GM12878 (cell line): ENCODE measurements at regions of chr3 and their contacts with region 1.

Region 1: GRCh38 chr3:140128631-140129030 is 193.6 kb downstream of the CLSTN2 start:
- DNase-seq: no peak
- ATAC-seq: peak; percentile 95
- H3K4me3 ChIP-seq: no peak overlapping the region
- H3K27ac ChIP-seq: no peak overlapping the region
- H3K4me1 ChIP-seq: no peaks in the 10 kb centered on the region
- H3K27me3 ChIP-seq: peaks cover 0 to 2% of the 10 kb centered on the region in 2 experiments; a peak in 2 of 4 replicates
- CTCF ChIP-seq: peak; percentile 71 to 84 (median 72)
- EP300 ChIP-seq: no peak
- POLR2A ChIP-seq: no peak
- RAD21 ChIP-seq: peak; percentile 85

Region 2: DNA sequence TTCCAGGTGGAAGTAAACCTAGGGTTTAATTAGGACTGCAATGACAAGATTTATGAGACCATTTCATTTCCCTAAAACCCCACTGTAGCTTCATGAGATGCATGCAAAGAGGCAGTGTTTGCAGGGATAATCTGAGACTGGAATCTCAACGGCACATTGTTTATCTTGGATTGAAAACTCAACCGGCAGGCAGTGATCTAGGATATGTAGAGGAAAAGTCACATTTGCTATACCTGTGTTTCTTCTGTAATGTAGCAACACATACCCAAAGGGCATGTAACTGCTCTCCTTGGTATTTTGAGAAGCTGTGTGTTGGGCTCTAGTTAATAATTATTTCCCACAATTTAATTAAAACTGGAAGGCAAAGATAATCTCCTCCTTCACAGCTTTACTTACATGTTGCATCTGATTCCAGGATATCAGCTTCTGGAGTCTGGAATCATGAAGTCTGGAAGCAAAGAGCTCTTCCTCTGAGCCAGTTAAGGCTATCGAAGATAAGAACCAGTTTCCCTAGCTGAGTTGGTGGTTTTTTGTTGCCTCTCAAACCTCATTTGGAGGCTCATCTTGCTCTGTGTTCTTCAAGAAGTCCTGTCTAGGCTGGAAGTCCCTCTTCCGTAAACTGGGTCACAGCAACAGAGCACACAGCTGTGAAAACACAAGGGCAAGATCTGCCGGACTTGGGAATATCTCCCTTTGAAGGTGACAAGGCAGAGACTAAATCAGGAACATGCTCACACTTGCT is 212.1 kb before region 1 on chr3:
- CTCF ChIA-PET with region 1: no interaction called
- POLR2A ChIA-PET with region 1: no interaction called
- RAD21 ChIA-PET with region 1: no interaction called
- SMC1A ChIA-PET with region 1: no interaction called
- in situ Hi-C with region 1: no loop called
- intact Hi-C with region 1: no loop called
- DNase-seq: no peak
- ATAC-seq: no peak
- H3K4me3 ChIP-seq: no peak overlapping the region
- H3K27ac ChIP-seq: no peak overlapping the region
- H3K4me1 ChIP-seq: no peaks in the 10 kb centered on the region
- H3K27me3 ChIP-seq: no peaks in the 10 kb centered on the region
- CTCF ChIP-seq: no peak
- EP300 ChIP-seq: no peak
- POLR2A ChIP-seq: no peak
- RAD21 ChIP-seq: no peak

Region 3: DNA sequence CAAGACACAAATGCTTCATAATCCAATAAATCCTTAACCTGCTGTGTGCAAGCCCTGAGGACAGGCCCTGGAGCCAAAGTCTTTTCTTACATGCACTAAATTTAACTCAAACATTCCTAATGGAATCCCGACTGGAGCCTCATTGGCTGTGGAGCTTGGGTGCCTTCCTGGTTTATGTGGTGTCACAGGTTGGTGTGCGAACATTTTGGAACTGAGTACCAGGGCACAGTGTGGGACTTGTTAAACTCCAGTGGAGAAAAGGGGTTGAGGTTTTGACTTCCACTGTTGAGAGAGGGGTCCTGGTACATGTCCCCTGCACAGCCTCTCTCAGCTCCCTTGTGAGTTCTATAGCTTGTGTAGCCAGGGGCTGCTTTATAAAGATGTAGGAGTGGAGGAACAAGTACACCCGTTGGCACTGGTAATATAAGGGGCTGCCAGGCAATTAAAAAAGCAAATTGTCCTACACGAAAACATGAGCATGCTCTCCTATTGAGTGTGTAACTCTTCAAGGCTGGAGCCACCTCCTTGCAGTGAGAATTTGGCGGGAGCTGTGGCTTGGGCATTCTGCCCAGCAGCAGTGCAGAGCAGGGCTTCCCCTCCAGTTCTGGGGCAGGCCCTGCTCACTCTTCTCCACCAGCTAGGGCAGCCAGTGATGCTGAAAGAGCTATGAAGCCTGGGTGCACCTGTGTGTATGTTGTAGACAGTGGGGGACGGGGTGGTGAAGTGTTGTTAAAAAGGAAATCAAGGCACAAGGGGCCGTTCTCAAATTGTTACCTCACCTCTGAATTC is 24.4 kb after region 1 on chr3:
- CTCF ChIA-PET with region 1: interaction called, 11 read pairs
- POLR2A ChIA-PET with region 1: interaction called, 3 read pairs
- RAD21 ChIA-PET with region 1: interaction called, 3 read pairs
- SMC1A ChIA-PET with region 1: interaction called, 6 read pairs
- in situ Hi-C with region 1: no loop called
- intact Hi-C with region 1: no loop called
- DNase-seq: no peak
- ATAC-seq: peak; percentile 26; the same call in 1 of the 3 replicates
- H3K4me3 ChIP-seq: no peak overlapping the region
- H3K27ac ChIP-seq: no peak overlapping the region
- H3K4me1 ChIP-seq: 0 out of 2 replicates have a peak, but pooled peaks cover 11% of the 10 kb centered on the region
- H3K27me3 ChIP-seq: no peaks in the 10 kb centered on the region
- CTCF ChIP-seq: no peak
- EP300 ChIP-seq: no peak
- POLR2A ChIP-seq: no peak
- RAD21 ChIP-seq: no peak

Region 4: GRCh38 chr3:140176526-140176925 is 47.9 kb after region 1 on chr3:
- CTCF ChIA-PET with region 1: interaction called, 12 read pairs
- POLR2A ChIA-PET with region 1: no interaction called
- RAD21 ChIA-PET with region 1: interaction called, 5 read pairs
- SMC1A ChIA-PET with region 1: interaction called, 12 read pairs
- in situ Hi-C with region 1: no loop called
- intact Hi-C with region 1: no loop called
- DNase-seq: no peak
- ATAC-seq: no peak
- H3K4me3 ChIP-seq: no peak overlapping the region
- H3K27ac ChIP-seq: no peak overlapping the region
- H3K4me1 ChIP-seq: no peaks in the 10 kb centered on the region; the same call in 1 of the 2 replicates
- H3K27me3 ChIP-seq: no peaks in the 10 kb centered on the region
- CTCF ChIP-seq: no peak
- EP300 ChIP-seq: no peak
- POLR2A ChIP-seq: no peak
- RAD21 ChIP-seq: no peak

Region 5: DNA sequence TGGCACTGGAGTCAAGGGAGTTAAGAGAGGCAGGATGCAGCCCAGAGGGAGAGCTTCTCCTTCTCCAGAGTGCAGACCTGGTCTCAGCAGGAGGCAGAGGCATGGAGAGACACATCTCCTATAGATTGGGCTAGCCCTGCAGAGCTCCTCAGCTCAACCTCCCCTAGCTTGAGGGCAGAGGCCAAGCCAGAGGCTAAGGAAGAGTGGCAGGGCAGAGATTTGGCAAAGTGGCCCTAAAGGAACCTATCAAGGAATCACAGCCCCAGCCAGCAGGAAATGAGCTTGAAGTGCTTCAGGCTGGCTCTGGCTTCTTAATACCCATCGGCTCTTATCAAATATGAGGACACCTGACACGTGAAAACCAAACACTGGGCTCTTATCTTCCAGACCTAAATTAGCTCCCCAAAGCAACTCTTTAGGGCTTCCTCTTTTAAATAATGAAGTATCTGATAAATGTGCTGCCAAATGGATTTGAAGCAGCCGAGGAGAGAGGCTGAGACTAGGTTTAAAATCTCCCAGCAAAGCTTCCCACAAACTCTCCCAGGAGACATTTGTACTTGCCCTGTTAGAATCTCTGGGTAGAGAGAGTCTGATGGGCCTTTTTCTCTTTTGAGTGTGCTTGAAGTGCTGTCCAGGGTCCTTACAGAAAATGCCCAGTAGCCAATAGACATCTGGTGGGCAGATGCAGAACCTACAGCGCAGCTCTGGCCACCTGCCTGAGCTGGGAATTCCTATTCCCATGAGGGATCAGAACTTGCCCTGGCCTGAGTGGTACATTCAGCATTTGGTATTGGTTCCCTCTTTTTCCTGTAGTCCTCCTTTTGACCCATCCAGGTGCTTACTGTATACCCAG is 77.8 kb after region 1 on chr3:
- CTCF ChIA-PET with region 1: interaction called, 16 read pairs
- POLR2A ChIA-PET with region 1: no interaction called
- RAD21 ChIA-PET with region 1: interaction called, 9 read pairs
- SMC1A ChIA-PET with region 1: interaction called, 12 read pairs
- in situ Hi-C with region 1: loop called (anchors 5 kb)
- intact Hi-C with region 1: no loop called
- DNase-seq: no peak
- ATAC-seq: peak; percentile 65
- H3K4me3 ChIP-seq: no peak overlapping the region
- H3K27ac ChIP-seq: no peak overlapping the region
- H3K4me1 ChIP-seq: no peaks in the 10 kb centered on the region
- H3K27me3 ChIP-seq: no peaks in the 10 kb centered on the region; a peak in 2 of 4 replicates
- CTCF ChIP-seq: peak in 2 of 3 experiments; percentile 24 to 30; a peak in 2 of 6 replicates
- EP300 ChIP-seq: no peak
- POLR2A ChIP-seq: no peak
- RAD21 ChIP-seq: peak; percentile 35; the same call in 1 of the 2 replicates

Region 6: DNA sequence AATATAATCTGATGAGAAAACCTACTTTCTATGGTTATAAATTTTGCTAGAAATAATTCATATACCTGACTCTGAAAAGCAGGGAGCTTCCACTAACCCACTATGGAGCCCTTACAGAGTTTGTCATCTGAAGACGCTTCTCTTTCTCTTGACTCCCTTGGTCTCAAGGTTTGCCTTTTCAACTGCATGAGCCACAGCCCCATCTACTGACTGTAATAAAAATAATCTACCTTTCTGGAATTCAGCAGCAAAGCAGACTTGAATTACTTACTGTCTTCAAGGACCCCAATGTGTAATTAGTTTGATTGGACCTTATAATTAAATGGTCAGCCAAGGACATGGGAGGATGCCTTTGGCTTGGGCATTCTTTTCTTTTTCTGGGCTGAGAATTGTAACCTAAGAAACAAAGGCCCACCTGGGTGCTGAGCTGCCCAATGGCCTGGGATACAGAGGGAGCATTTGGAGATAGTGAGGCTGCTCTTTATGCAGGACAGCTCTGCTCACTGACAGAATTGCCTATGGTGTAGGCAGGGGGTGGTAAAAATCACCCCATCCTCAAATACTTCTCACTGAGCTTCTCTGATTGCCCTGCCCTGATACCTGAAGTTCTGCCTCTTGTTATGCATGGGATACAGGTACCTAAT is 370.6 kb after region 1 on chr3:
- CTCF ChIA-PET with region 1: interaction called, 14 read pairs
- POLR2A ChIA-PET with region 1: no interaction called
- RAD21 ChIA-PET with region 1: interaction called, 9 read pairs
- SMC1A ChIA-PET with region 1: interaction called, 4 read pairs
- in situ Hi-C with region 1: no loop called
- intact Hi-C with region 1: loop called (anchors 5 kb)
- DNase-seq: no peak
- ATAC-seq: peak; percentile 61
- H3K4me3 ChIP-seq: no peak overlapping the region
- H3K27ac ChIP-seq: no peak overlapping the region
- H3K4me1 ChIP-seq: no peaks in the 10 kb centered on the region
- H3K27me3 ChIP-seq: no peaks in the 10 kb centered on the region; a peak in 1 of 4 replicates
- CTCF ChIP-seq: peak in 2 of 3 experiments; percentile 12 to 59; a peak in 2 of 6 replicates
- EP300 ChIP-seq: no peak
- POLR2A ChIP-seq: no peak
- RAD21 ChIP-seq: peak; percentile 45